Heart left ventricle (tissue), 16 donors: ENCODE measurements at regions of chr9 and their contacts with region 1.

Region 1: DNA sequence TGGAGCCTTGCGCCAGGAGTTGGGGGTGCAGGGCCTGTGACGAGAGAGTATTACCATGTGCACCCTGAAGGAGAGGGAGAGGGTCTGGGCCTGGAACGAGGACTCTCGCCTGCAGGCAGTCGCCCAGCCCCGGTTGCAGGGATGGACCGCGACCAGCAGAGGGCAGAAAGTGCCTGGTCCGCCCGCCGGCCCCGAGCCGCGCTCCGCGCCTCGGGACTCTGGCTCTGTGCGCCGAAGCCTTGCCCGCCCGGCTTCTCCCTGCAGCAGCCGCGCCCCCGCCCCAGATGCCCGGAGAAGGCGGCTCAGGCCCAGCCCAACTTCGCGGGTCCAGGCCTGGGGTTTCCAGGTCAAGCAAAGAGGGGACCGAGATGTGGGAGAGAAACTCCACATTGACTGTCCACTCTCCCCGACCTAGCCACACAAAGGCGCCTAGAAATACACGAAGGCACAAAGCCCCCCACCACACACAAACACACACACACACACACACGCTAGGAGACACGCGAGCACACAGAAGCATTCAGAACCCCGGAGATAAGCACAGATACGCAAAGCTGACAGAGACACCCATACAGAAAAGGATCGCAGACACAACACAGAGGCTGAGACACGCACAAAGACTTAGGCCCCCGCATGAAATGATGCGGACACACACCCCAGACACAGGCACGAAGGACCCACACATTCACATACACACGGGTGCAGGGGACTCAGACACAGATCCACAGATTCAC is 2.0 kb upstream of the LMX1B start:
- DNase-seq: peak; percentile 76 to 88 (median 78)
- ATAC-seq: peak; percentile 36 to 88 (median 84)
- H3K4me3 ChIP-seq: peak overlapping the region in 11 of 12 donors; percentile 30 to 60 (median 49)
- H3K27ac ChIP-seq: peak overlapping the region in 1 of 12 donors; percentile 4
- H3K4me1 ChIP-seq: peaks cover 0 to 51% (median 21%) of the 10 kb centered on the region in 12 donors
- H3K27me3 ChIP-seq: peaks cover 37 to 91% (median 67%) of the 10 kb centered on the region in 9 donors
- CTCF ChIP-seq: peak; percentile 74 to 91 (median 86)
- POLR2A ChIP-seq: no peak

Region 2: GRCh38 chr9:126144603-126145456 is 466.9 kb before region 1 on chr9:
- intact Hi-C with region 1: no loop called
- DNase-seq: no peak
- ATAC-seq: peak in 2 of 4 donors; percentile 34 to 70
- H3K4me3 ChIP-seq: no peak overlapping the region
- H3K27ac ChIP-seq: peak overlapping the region in 3 of 12 donors; percentile 34 to 68 (median 57)
- H3K4me1 ChIP-seq: peaks cover 0 to 19% (median 0%) of the 10 kb centered on the region in 12 donors
- H3K27me3 ChIP-seq: peaks cover 0 to 11% (median 0%) of the 10 kb centered on the region in 9 donors
- CTCF ChIP-seq: no peak
- POLR2A ChIP-seq: no peak

Region 3: DNA sequence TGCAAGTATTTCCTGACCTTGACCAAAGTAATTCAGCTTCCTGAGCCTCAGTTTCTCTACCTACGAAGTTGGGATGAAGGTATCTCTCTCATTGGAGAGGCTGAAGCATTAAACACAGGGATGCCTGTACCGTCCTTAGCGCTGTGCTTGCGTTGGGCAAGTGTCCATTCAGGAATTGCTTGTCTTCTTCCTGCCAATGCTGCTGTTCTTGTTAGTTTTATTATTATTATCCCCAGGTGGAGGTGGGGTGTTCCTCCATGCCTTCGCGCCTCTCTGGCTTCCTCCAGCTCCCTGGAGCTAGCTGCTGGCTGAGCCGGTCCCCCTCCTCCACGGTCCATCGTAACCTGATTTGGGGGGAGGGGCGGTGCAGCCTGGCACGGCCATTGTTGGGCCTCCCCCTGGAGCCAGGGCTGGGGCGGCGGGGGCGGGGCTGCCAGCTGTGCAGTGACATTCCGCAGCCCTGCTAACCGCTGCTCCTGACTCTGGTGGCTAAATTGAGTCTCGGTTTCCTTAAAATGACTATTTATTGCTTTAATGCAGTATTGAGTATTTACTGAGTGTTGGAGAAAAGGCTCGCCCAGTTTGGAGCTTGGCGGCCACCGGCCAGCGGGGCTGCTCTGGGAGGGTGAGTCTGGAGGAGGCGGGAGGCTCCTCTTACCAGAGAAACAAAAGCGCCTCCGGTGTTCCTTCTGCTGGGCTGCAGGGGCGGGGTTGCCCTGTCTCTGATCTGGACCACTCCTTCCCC is 53.3 kb after region 1 on chr9:
- intact Hi-C with region 1: loop called in 1 of 10 experiments (anchors 5 kb)
- DNase-seq: no peak
- ATAC-seq: no peak
- H3K4me3 ChIP-seq: no peak overlapping the region
- H3K27ac ChIP-seq: no peak overlapping the region
- H3K4me1 ChIP-seq: peaks cover 0 to 37% (median 18%) of the 10 kb centered on the region in 12 donors
- H3K27me3 ChIP-seq: peaks cover 0 to 34% (median 0%) of the 10 kb centered on the region in 9 donors
- CTCF ChIP-seq: no peak
- POLR2A ChIP-seq: no peak

Region 4: GRCh38 chr9:126682928-126683697 is 71.4 kb after region 1 on chr9:
- intact Hi-C with region 1: loop called in 3 of 10 experiments (anchors 5 kb)
- DNase-seq: peak in 4 of 5 donors; percentile 27 to 68 (median 42)
- ATAC-seq: peak in 3 of 4 donors; percentile 13 to 71 (median 36)
- H3K4me3 ChIP-seq: peak overlapping the region in 9 of 12 donors; percentile 10 to 43 (median 25)
- H3K27ac ChIP-seq: no peak overlapping the region
- H3K4me1 ChIP-seq: peaks cover 0 to 12% (median 0%) of the 10 kb centered on the region in 12 donors
- H3K27me3 ChIP-seq: peaks cover 0 to 66% (median 35%) of the 10 kb centered on the region in 9 donors
- CTCF ChIP-seq: no peak
- POLR2A ChIP-seq: no peak

Region 5: GRCh38 chr9:126690431-126691350 is 78.9 kb after region 1 on chr9:
- intact Hi-C with region 1: loop called in 9 of 10 experiments (anchors 1 to 5 kb)
- DNase-seq: peak in 3 of 5 donors; percentile 51 to 71 (median 51)
- ATAC-seq: peak in 3 of 4 donors; percentile 33 to 70 (median 39)
- H3K4me3 ChIP-seq: no peak overlapping the region
- H3K27ac ChIP-seq: no peak overlapping the region
- H3K4me1 ChIP-seq: no peaks in the 10 kb centered on the region
- H3K27me3 ChIP-seq: peaks cover 0 to 37% (median 14%) of the 10 kb centered on the region in 9 donors
- CTCF ChIP-seq: peak; percentile 45 to 71 (median 58)
- POLR2A ChIP-seq: no peak

Region 6: GRCh38 chr9:126781186-126782052 is 169.7 kb after region 1 on chr9:
- intact Hi-C with region 1: loop called in 9 of 10 experiments (anchors 2 to 10 kb)
- DNase-seq: peak; percentile 77 to 89 (median 79)
- ATAC-seq: peak; percentile 79 to 86 (median 81)
- H3K4me3 ChIP-seq: peak overlapping the region in 3 of 12 donors; percentile 4 to 26 (median 9)
- H3K27ac ChIP-seq: no peak overlapping the region
- H3K4me1 ChIP-seq: peaks cover 0 to 17% (median 5%) of the 10 kb centered on the region in 12 donors
- H3K27me3 ChIP-seq: peaks cover 0 to 34% (median 3%) of the 10 kb centered on the region in 9 donors
- CTCF ChIP-seq: peak; percentile 89 to 98 (median 95)
- POLR2A ChIP-seq: no peak